ENCODE measurements at regions of chr14 and their contacts with region 1.

Region 1: GRCh38 chr14:104563742-104564615 is 15.6 kb upstream of the C14orf180 start:
- DNase-seq: peak; percentile 68 to 86 (median 79)
- ATAC-seq: peak; percentile 94
- H3K4me3 ChIP-seq: no peak overlapping the region
- H3K27ac ChIP-seq: no peak overlapping the region
- H3K4me1 ChIP-seq: peaks cover 0 to 40% of the 10 kb centered on the region in 2 experiments; a peak in 2 of 5 replicates
- H3K27me3 ChIP-seq: peaks cover 0 to 39% of the 10 kb centered on the region in 2 experiments; a peak in 3 of 5 replicates
- CTCF ChIP-seq: peak; percentile 70 to 82 (median 77)
- EP300 ChIP-seq: no peak
- POLR2A ChIP-seq: no peak
- RAD21 ChIP-seq: peak; percentile 66 to 78

Region 2: GRCh38 chr14:104078031-104078455 is 485.9 kb before region 1 on chr14:
- CTCF ChIA-PET with region 1: interaction called, 9 read pairs
- POLR2A ChIA-PET with region 1: interaction called, 5 read pairs
- in situ Hi-C with region 1: no loop called
- intact Hi-C with region 1: loop called (anchors 5 kb)
- DNase-seq: peak; percentile 81 to 83 (median 81)
- ATAC-seq: peak; percentile 100
- H3K4me3 ChIP-seq: no peak overlapping the region
- H3K27ac ChIP-seq: no peak overlapping the region
- H3K4me1 ChIP-seq: no peaks in the 10 kb centered on the region
- H3K27me3 ChIP-seq: peaks cover 0 to 10% of the 10 kb centered on the region in 2 experiments; a peak in 1 of 5 replicates
- CTCF ChIP-seq: peak; percentile 99 to 100 (median 99)
- EP300 ChIP-seq: no peak
- POLR2A ChIP-seq: no peak
- RAD21 ChIP-seq: peak; percentile 89 to 97

Region 3: DNA sequence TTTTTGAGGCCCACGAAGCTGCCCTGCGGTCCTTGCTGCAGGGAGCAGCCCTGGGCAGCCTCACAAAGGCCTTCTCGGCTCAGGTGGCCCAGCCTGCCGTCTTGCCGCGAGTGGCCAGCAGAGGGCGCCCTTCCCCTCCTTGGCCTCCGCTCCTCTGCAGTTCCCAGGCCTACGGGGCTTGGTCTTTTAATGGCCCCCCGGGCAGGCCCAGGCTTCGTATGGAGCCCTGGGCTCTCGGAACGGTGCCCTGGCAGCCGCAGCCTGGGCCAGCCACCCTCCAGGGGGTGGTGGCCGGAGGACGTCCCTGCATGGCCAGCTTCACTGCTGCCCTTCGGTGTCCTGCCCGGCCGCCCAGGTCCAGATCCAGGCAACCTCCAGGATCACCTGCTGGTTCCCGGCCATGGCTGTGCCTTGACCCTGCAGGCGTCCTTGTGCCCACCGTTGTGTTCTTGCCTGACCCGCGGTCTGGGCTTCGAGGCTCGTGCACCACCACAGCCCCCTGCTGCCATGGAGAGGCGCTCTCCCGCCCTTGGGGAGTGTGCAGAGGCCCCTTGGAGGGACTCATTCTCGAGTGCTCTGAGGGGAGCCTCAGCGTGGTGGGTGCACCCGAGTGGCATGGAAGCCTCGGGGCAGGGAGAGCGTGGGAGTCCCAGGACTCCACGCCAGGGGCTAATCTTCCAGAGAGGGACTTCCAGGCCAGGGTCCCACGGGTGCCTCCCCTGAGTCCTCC is 469.1 kb before region 1 on chr14:
- CTCF ChIA-PET with region 1: no interaction called
- POLR2A ChIA-PET with region 1: no interaction called
- in situ Hi-C with region 1: no loop called
- intact Hi-C with region 1: loop called (anchors 5 kb)
- DNase-seq: peak; percentile 64 to 74 (median 70)
- ATAC-seq: peak; percentile 93
- H3K4me3 ChIP-seq: no peak overlapping the region
- H3K27ac ChIP-seq: no peak overlapping the region
- H3K4me1 ChIP-seq: peaks cover 0 to 23% of the 10 kb centered on the region in 2 experiments; a peak in 2 of 5 replicates
- H3K27me3 ChIP-seq: peaks cover 0 to 6% of the 10 kb centered on the region in 2 experiments; a peak in 2 of 5 replicates
- CTCF ChIP-seq: peak; percentile 70 to 79 (median 75)
- EP300 ChIP-seq: no peak
- POLR2A ChIP-seq: no peak
- RAD21 ChIP-seq: peak; percentile 29 to 68; a peak in 3 of 4 replicates

Region 4: DNA sequence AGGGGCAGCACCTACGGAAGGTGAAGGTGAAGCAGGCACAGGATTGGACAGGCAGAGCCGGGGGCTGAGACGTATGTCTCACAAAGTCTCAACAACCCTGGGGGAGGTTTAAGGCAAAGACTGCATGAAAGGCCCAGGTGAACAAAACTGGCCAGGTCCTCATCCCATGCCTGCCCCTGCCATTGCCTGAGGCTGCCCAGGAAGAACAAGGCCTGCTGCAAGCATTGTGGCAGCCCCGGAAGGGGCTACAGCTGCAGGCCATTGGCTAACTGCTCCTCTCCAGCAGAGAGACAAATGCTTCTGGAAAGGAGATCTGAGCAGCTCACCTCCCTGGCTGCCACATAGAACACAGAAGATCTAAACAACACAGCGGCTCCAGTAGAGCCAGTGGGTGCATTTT is 61.0 kb after region 1 on chr14:
- CTCF ChIA-PET with region 1: no interaction called
- POLR2A ChIA-PET with region 1: no interaction called
- in situ Hi-C with region 1: no loop called
- intact Hi-C with region 1: loop called (anchors 10 kb)
- DNase-seq: no peak
- ATAC-seq: no peak
- H3K4me3 ChIP-seq: no peak overlapping the region
- H3K27ac ChIP-seq: no peak overlapping the region
- H3K4me1 ChIP-seq: no peaks in the 10 kb centered on the region
- H3K27me3 ChIP-seq: peaks cover 9 to 18% of the 10 kb centered on the region in 2 experiments; a peak in 4 of 5 replicates
- CTCF ChIP-seq: no peak
- EP300 ChIP-seq: no peak
- POLR2A ChIP-seq: no peak
- RAD21 ChIP-seq: no peak

Measured in K562 (cell line).